ENCODE measurements at regions of chr2 and their contacts with region 1.

Region 1: GRCh38 chr2:172465417-172466334 is 38.3 kb downstream of the ITGA6 start:
- DNase-seq: peak; percentile 79
- H3K4me3 ChIP-seq: no peak overlapping the region
- H3K27ac ChIP-seq: no peak overlapping the region
- H3K4me1 ChIP-seq: peaks cover 27% of the 10 kb centered on the region
- H3K27me3 ChIP-seq: no peaks in the 10 kb centered on the region
- CTCF ChIP-seq: peak; percentile 71 to 75
- POLR2A ChIP-seq: no peak

Region 2: GRCh38 chr2:171703574-171704347 is 761.9 kb before region 1 on chr2:
- CTCF ChIA-PET with region 1: interaction called, 4 read pairs
- POLR2A ChIA-PET with region 1: no interaction called
- dilution Hi-C with region 1: no loop called
- intact Hi-C with region 1: loop called (anchors 10 kb)
- DNase-seq: peak; percentile 59
- H3K4me3 ChIP-seq: no peak overlapping the region
- H3K27ac ChIP-seq: no peak overlapping the region
- H3K4me1 ChIP-seq: peaks cover 4% of the 10 kb centered on the region
- H3K27me3 ChIP-seq: no peaks in the 10 kb centered on the region
- CTCF ChIP-seq: peak; percentile 19 to 39
- POLR2A ChIP-seq: no peak

Region 3: DNA sequence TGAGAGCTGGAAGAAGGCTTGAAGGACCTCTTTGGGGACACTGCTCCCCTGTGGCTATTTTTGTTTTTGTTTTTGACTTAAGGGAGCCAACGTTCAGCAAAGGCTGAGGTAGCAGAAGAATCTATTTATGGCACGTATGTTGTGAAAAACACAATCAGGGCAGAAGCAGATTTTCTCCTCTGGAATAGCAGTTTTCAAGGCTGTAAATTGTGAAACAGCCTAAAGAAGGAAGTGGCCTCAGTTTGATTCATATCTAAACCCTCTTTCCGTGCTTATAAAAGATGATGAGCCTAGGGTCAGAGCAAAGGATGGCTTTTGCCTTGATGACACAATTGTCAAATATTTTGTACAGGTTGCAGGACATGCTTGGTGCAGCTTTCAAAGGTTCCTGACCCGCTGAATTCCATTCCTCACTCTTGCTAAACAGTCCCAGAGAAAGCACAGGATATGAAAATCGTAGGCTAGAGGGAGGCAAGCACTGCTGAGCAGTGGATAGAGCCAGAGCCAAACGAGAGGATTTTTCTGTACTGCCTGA is 256.8 kb before region 1 on chr2:
- CTCF ChIA-PET with region 1: interaction called, 28 read pairs
- POLR2A ChIA-PET with region 1: no interaction called
- dilution Hi-C with region 1: no loop called
- intact Hi-C with region 1: no loop called
- DNase-seq: peak; percentile 58
- H3K4me3 ChIP-seq: peak overlapping the region in 1 of 3 experiments; percentile 27
- H3K27ac ChIP-seq: peak overlapping the region; percentile 39
- H3K4me1 ChIP-seq: peaks cover 16% of the 10 kb centered on the region
- H3K27me3 ChIP-seq: no peaks in the 10 kb centered on the region
- CTCF ChIP-seq: no peak
- POLR2A ChIP-seq: no peak

Region 4: GRCh38 chr2:172253190-172254052 is 212.3 kb before region 1 on chr2:
- CTCF ChIA-PET with region 1: interaction called, 30 read pairs
- POLR2A ChIA-PET with region 1: no interaction called
- dilution Hi-C with region 1: no loop called
- intact Hi-C with region 1: loop called (anchors 2 kb)
- DNase-seq: peak; percentile 99
- H3K4me3 ChIP-seq: no peak overlapping the region
- H3K27ac ChIP-seq: peak overlapping the region; percentile 95
- H3K4me1 ChIP-seq: peaks cover 54% of the 10 kb centered on the region
- H3K27me3 ChIP-seq: no peaks in the 10 kb centered on the region
- CTCF ChIP-seq: no peak
- POLR2A ChIP-seq: peak; percentile 68

Region 5: DNA sequence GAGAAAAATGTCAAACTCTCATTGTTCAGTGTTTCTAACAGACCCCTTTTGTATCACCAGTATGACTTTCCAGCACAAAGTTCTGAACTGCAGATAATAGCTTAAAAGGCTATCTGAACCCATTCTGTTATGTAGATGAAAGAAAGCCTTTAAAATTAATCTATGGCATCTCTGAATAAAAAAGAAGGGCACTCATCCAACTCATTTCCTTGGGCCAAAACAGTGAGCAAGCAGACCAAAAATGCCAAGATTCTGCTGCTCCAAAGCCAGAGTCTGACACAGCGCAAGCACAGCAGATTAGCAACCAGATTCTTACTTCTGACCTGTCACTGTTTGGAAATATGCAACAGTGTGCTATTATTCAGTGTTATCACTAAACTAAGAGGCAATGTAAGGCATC is 60.9 kb before region 1 on chr2:
- CTCF ChIA-PET with region 1: interaction called, 11 read pairs
- POLR2A ChIA-PET with region 1: no interaction called
- dilution Hi-C with region 1: no loop called
- intact Hi-C with region 1: no loop called
- DNase-seq: peak; percentile 78
- H3K4me3 ChIP-seq: no peak overlapping the region
- H3K27ac ChIP-seq: no peak overlapping the region
- H3K4me1 ChIP-seq: peaks cover 29% of the 10 kb centered on the region
- H3K27me3 ChIP-seq: no peaks in the 10 kb centered on the region
- CTCF ChIP-seq: no peak
- POLR2A ChIP-seq: no peak

Region 6: DNA sequence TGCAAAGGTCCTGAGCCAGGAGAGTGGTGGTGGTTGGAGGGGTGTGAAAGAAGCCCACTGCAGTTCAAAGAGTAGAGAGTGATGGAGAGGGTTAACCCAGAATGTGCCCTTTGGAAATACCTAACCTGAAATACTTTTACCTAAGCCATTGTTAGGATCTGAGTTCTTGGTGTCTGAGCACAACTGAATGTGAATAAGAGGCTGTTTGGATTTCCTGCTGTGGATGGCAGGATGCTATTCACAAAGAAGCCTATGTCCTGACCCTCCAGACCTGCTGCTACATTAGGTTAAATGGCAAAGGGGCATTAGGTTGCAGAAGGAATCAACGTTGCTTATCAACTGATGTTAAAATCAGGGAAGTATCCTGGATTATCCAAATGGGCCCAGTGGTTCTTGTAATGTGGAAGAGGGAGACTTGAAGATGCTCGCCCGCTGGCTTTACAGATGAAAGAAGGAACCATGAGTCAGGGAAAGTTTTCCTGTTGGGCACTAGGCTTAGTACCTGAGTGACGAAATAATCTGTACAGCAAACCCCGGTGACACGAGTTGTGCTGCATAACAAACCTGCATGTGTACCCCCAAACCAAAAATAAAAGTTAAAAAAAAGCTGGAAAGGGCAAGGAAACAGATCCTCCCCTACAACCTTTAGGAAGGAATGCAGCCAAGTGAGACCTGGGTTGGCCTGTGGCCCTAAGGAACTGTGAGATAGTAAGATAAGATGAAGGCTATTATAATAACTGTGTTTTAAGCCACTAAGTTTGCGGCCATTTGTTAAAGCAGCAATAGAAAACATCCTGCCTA is 11.1 kb before region 1 on chr2:
- CTCF ChIA-PET with region 1: interaction called, 26 read pairs
- POLR2A ChIA-PET with region 1: no interaction called
- dilution Hi-C with region 1: no loop called
- intact Hi-C with region 1: no loop called
- DNase-seq: no peak
- H3K4me3 ChIP-seq: no peak overlapping the region
- H3K27ac ChIP-seq: no peak overlapping the region
- H3K4me1 ChIP-seq: peaks cover 6% of the 10 kb centered on the region
- H3K27me3 ChIP-seq: no peaks in the 10 kb centered on the region
- CTCF ChIP-seq: no peak
- POLR2A ChIP-seq: no peak

Region 7: DNA sequence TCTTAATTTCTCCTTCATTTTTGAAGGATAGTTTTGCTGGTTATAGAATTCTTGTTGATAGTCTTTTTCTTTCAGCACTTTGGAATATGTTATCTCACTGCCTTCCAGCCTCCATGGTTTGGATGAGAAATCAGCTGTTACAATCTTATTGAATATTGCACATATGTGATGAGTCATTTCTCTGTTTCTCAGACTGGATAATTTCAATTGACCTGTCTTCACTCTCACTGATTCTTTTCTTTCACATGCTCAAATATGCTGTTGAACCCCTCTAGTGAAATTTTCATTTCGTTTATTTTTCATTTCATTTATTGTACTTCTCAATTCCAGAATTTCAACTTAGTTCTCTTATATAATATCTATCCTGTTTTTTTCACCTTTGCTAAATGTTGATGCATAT is 112.4 kb after region 1 on chr2:
- CTCF ChIA-PET with region 1: no interaction called
- POLR2A ChIA-PET with region 1: no interaction called
- dilution Hi-C with region 1: no loop called
- intact Hi-C with region 1: no loop called
- DNase-seq: no peak
- H3K4me3 ChIP-seq: no peak overlapping the region
- H3K27ac ChIP-seq: no peak overlapping the region
- H3K4me1 ChIP-seq: no peaks in the 10 kb centered on the region
- H3K27me3 ChIP-seq: no peaks in the 10 kb centered on the region
- CTCF ChIP-seq: no peak
- POLR2A ChIP-seq: no peak

Measured in endothelial cell of umbilical vein (primary cell).